PC-9 (cell line): ENCODE measurements at regions of chr1 and their contacts with region 1.

Region 1: GRCh38 chr1:230066466-230067404 is at the start of gene GALNT2:
- DNase-seq: peak; percentile 63 to 92
- H3K4me3 ChIP-seq: peak within 1 kb of the TSS; percentile 93
- H3K27ac ChIP-seq: peak within 1 kb of the TSS; percentile 39
- H3K4me1 ChIP-seq: peaks cover 22% of the 10 kb centered on the region
- H3K27me3 ChIP-seq: no peaks in the 10 kb centered on the region
- CTCF ChIP-seq: no peak
- total RNA-seq, gene GALNT2: 104 and 121 TPM in 2 replicates

Region 2: GRCh38 chr1:230084138-230084880 is 17.6 kb after region 1 on chr1:
- CTCF ChIA-PET with region 1: no interaction called
- POLR2A ChIA-PET with region 1: no interaction called
- intact Hi-C with region 1: loop called (anchors 2 kb)
- DNase-seq: peak; percentile 86 to 95
- H3K4me3 ChIP-seq: peak overlapping the region; percentile 4; the same call in 1 of the 2 replicates
- H3K27ac ChIP-seq: peak overlapping the region; percentile 85
- H3K4me1 ChIP-seq: peaks cover 48% of the 10 kb centered on the region
- H3K27me3 ChIP-seq: no peaks in the 10 kb centered on the region
- CTCF ChIP-seq: no peak

Region 3: GRCh38 chr1:230140221-230141020 is 73.7 kb after region 1 on chr1:
- CTCF ChIA-PET with region 1: no interaction called
- POLR2A ChIA-PET with region 1: no interaction called
- intact Hi-C with region 1: no loop called
- DNase-seq: no peak
- H3K4me3 ChIP-seq: no peak overlapping the region
- H3K27ac ChIP-seq: no peak overlapping the region
- H3K4me1 ChIP-seq: no peaks in the 10 kb centered on the region
- H3K27me3 ChIP-seq: no peaks in the 10 kb centered on the region
- CTCF ChIP-seq: no peak

Region 4: GRCh38 chr1:230186003-230186863 is 119.5 kb after region 1 on chr1:
- CTCF ChIA-PET with region 1: no interaction called
- POLR2A ChIA-PET with region 1: no interaction called
- intact Hi-C with region 1: loop called (anchors 5 kb)
- DNase-seq: peak; percentile 70 to 72
- H3K4me3 ChIP-seq: no peak overlapping the region
- H3K27ac ChIP-seq: no peak overlapping the region
- H3K4me1 ChIP-seq: peaks cover 14% of the 10 kb centered on the region
- H3K27me3 ChIP-seq: no peaks in the 10 kb centered on the region
- CTCF ChIP-seq: no peak

Region 5: GRCh38 chr1:230205719-230206198 is 139.0 kb after region 1 on chr1:
- CTCF ChIA-PET with region 1: no interaction called
- POLR2A ChIA-PET with region 1: no interaction called
- intact Hi-C with region 1: loop called (anchors 5 kb)
- DNase-seq: no peak
- H3K4me3 ChIP-seq: no peak overlapping the region
- H3K27ac ChIP-seq: no peak overlapping the region
- H3K4me1 ChIP-seq: peaks cover 18% of the 10 kb centered on the region
- H3K27me3 ChIP-seq: no peaks in the 10 kb centered on the region
- CTCF ChIP-seq: no peak

Region 6: GRCh38 chr1:230268366-230269170 is 201.8 kb after region 1 on chr1:
- CTCF ChIA-PET with region 1: no interaction called
- POLR2A ChIA-PET with region 1: no interaction called
- intact Hi-C with region 1: loop called (anchors 5 kb)
- DNase-seq: peak; percentile 48 to 50
- H3K4me3 ChIP-seq: no peak overlapping the region
- H3K27ac ChIP-seq: no peak overlapping the region
- H3K4me1 ChIP-seq: no peaks in the 10 kb centered on the region
- H3K27me3 ChIP-seq: no peaks in the 10 kb centered on the region
- CTCF ChIP-seq: peak; percentile 75